Dendritic cell treated with granulocyte-macrophage colony-stimulating factor and Interleukin-4, amounts not matched to agents 40 ng/mL and 50 ng/mL, for 4 days (primary cell): ENCODE measurements at regions of chr6 and their contacts with region 1.

Region 1: GRCh38 chr6:13487122-13488014 is at the start of gene GFOD1:
- H3K4me3 Mint-ChIP-seq: peak within 1 kb of the TSS; percentile 94
- H3K27ac Mint-ChIP-seq: peak within 1 kb of the TSS; percentile 81
- H3K4me1 Mint-ChIP-seq: peaks cover 44% of the 10 kb centered on the region
- H3K27me3 Mint-ChIP-seq: peaks cover 11% of the 10 kb centered on the region

Region 2: DNA sequence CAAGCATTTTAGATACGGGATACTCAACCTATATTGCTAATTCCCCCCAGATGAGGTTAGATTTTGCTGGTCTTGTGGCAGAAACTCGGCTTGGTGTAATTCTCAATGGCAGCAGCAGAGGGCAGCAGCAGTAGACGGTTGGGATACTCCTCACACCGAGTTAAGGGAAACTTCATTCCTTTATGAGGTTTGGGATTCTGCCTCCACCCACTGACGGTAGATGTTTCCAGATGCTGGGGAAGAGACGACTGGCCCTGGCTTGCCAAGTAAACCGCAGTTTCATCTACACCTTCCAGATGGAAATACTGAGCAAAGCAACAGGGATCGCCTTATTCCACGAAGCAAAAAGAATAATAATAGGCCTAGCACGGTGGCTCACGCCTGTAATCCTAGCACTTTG is 150.8 kb before region 1 on chr6:
- intact Hi-C with region 1: loop called (anchors 5 kb)
- H3K4me3 Mint-ChIP-seq: no peak overlapping the region
- H3K27ac Mint-ChIP-seq: no peak overlapping the region
- H3K4me1 Mint-ChIP-seq: peaks cover 34% of the 10 kb centered on the region
- H3K27me3 Mint-ChIP-seq: no peaks in the 10 kb centered on the region

Region 3: GRCh38 chr6:13441778-13442177 is 45.6 kb before region 1 on chr6:
- intact Hi-C with region 1: no loop called
- H3K4me3 Mint-ChIP-seq: no peak overlapping the region
- H3K27ac Mint-ChIP-seq: no peak overlapping the region
- H3K4me1 Mint-ChIP-seq: peaks cover 14% of the 10 kb centered on the region
- H3K27me3 Mint-ChIP-seq: no peaks in the 10 kb centered on the region

Region 4: GRCh38 chr6:13454286-13455221 is 32.8 kb before region 1 on chr6:
- intact Hi-C with region 1: loop called (anchors 5 kb)
- H3K4me3 Mint-ChIP-seq: peak overlapping the region; percentile 24
- H3K27ac Mint-ChIP-seq: peak overlapping the region; percentile 68
- H3K4me1 Mint-ChIP-seq: peaks cover 43% of the 10 kb centered on the region
- H3K27me3 Mint-ChIP-seq: no peaks in the 10 kb centered on the region

Region 5: DNA sequence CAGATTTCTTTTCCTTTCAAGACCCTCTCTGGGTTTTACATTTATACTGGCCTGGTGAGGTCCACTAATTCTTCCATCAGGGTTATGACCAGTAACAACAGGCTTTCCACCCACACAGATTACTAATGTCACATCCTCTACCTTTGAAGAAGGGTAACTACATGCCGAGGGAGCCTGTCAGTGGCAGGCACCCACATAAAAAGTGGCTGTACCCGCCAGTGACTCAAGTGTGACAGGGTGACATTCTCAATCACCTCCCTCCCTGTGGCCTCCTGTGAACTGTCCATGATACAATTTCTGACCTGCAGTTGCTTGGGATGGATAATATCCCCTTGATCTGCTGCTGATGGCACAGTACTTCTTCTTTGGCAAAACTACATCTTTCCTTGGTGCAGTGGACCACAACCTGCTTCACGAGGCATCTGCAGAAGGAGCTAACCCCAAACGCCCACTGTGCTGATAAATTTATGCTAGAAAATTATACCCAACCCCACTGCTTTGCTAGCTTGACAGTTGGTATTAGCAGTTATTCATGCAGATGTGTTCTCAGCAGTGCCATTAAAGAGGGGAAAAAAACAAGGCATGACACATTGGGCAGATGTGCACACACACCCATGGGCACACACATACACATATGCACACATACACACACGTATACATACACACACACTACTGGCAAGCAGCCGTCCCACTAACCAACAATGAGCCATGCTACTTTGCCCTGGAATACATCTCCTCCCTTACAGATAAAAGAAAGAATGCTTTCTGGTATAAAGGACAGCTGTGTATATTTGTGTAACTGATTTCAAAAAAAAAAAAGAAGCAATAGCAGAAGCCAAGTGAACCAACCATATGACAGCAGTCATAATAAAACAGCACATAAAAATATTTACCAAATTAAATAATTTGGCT is 20.8 kb before region 1 on chr6:
- intact Hi-C with region 1: loop called (anchors 2 kb)
- H3K4me3 Mint-ChIP-seq: peak overlapping the region; percentile 23
- H3K27ac Mint-ChIP-seq: peak overlapping the region; percentile 92
- H3K4me1 Mint-ChIP-seq: peaks cover 88% of the 10 kb centered on the region
- H3K27me3 Mint-ChIP-seq: no peaks in the 10 kb centered on the region